HAP-1 (cell line): ENCODE measurements at regions of chr13 and their contacts with region 1.

Region 1: GRCh38 chr13:26485786-26486185 is 71.7 kb upstream of the WASF3 start:
- DNase-seq: no peak
- H3K4me3 ChIP-seq: no peak overlapping the region
- H3K4me1 ChIP-seq: no peaks in the 10 kb centered on the region
- H3K27me3 ChIP-seq: no peaks in the 10 kb centered on the region

Region 2: DNA sequence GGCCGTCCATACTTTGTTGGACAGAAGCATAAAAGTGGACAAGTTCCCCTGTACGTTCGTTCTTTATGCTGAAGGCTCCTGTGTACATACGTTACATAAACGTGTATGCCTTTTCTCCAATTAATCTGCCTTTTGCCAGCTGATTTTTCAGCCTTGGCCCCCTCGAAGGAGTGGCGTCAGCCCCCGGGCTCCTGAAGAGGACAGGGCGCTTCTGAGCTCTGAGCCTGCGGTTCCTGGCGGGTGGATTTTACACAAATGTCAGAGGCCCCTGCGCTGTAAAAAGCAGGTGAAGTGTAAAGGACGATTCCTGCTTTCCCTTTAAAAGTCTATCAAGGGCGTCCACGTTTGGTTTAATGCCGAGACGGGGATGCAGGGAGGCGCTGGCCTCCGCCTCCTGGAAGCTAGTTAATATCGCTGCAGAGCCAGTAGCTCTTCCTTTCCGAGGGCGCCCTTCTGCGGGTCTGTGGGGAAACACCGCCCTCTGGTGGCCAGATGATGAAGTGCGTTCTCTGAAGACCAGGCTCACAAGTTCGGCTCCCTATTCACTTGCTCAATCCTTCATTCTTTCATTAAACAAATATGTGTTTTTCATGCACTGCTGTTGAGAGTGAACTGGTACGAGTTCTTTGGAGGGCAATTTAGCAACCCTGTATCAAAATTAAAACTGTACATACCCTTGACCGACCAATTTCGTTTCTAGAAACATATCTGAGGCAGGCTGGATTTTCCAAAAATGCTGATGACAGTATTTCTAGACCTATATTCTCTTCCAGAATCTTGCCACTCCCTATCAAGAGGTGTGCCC is 212.8 kb after region 1 on chr13:
- in situ Hi-C with region 1: loop called (anchors 5 kb)
- DNase-seq: peak; percentile 61 to 89
- H3K4me3 ChIP-seq: no peak overlapping the region
- H3K4me1 ChIP-seq: no peaks in the 10 kb centered on the region
- H3K27me3 ChIP-seq: peaks cover 4% of the 10 kb centered on the region; the same call in 1 of the 2 replicates